Caco-2 (cell line): ENCODE measurements at regions of chr10 and their contacts with region 1.

Region 1: DNA sequence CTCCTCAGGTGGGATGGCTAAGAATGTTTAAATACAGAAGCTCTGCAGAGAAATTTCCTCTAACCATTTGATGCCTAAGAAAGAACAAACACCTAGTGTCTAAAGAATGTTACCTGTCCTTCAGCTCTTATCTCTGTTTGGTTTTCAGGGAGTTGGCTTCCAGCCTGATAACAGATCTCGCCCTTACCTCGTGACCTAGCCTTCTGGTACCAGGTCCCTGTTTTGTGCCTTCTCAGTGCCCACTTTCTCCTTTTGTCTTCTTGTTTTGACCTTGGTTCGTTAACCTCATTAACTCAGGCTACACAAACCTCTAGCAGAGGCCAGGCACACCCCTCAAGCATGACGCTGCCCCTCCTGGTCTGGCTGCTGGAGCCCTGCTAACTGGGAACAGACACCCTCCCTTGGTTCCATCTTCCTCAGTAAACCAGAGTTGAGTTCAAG is 16.1 kb upstream of the RAB11FIP2 start:
- DNase-seq: peak; percentile 79 to 85
- H3K4me3 ChIP-seq: no peak overlapping the region
- H3K4me3 Mint-ChIP-seq: peak overlapping the region; percentile 52
- H3K27ac Mint-ChIP-seq: peak overlapping the region; percentile 88
- H3K4me1 ChIP-seq: peaks cover 43% of the 10 kb centered on the region
- H3K4me1 Mint-ChIP-seq: peaks cover 24% of the 10 kb centered on the region
- H3K27me3 ChIP-seq: no peaks in the 10 kb centered on the region
- H3K27me3 Mint-ChIP-seq: no peaks in the 10 kb centered on the region
- CTCF ChIP-seq: no peak

Region 2: DNA sequence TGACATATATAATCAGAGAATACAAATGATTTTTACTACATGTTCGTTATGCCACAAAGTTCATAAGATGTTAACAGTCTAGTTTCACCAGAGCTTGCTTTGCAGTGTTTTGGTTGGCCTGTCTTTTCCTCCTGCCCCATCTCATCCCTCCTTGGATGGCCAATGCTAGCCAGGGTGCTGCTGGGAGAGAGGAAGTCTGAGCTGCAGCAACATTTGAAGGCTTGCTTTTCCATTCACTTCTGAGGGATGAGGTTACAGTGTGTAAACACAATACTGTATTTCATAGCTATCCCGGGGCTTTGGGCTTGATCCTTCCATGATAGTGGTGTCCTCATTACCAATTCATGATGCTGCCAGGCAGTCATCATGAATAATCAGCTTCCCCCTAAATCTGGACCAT is 186.6 kb before region 1 on chr10:
- CTCF ChIA-PET with region 1: no interaction called
- POLR2A ChIA-PET with region 1: no interaction called
- intact Hi-C with region 1: no loop called
- DNase-seq: no peak
- H3K4me3 ChIP-seq: no peak overlapping the region
- H3K4me3 Mint-ChIP-seq: no peak overlapping the region
- H3K27ac Mint-ChIP-seq: no peak overlapping the region
- H3K4me1 ChIP-seq: no peaks in the 10 kb centered on the region
- H3K4me1 Mint-ChIP-seq: no peaks in the 10 kb centered on the region
- H3K27me3 ChIP-seq: no peaks in the 10 kb centered on the region
- H3K27me3 Mint-ChIP-seq: peaks cover 5% of the 10 kb centered on the region
- CTCF ChIP-seq: no peak

Region 3: GRCh38 chr10:117926491-117926890 is 136.3 kb before region 1 on chr10:
- CTCF ChIA-PET with region 1: no interaction called
- POLR2A ChIA-PET with region 1: no interaction called
- intact Hi-C with region 1: no loop called
- DNase-seq: no peak
- H3K4me3 ChIP-seq: no peak overlapping the region
- H3K4me3 Mint-ChIP-seq: no peak overlapping the region
- H3K27ac Mint-ChIP-seq: no peak overlapping the region
- H3K4me1 ChIP-seq: no peaks in the 10 kb centered on the region
- H3K4me1 Mint-ChIP-seq: no peaks in the 10 kb centered on the region
- H3K27me3 ChIP-seq: no peaks in the 10 kb centered on the region; the same call in 1 of the 2 replicates
- H3K27me3 Mint-ChIP-seq: peaks cover 12% of the 10 kb centered on the region
- CTCF ChIP-seq: no peak

Region 4: DNA sequence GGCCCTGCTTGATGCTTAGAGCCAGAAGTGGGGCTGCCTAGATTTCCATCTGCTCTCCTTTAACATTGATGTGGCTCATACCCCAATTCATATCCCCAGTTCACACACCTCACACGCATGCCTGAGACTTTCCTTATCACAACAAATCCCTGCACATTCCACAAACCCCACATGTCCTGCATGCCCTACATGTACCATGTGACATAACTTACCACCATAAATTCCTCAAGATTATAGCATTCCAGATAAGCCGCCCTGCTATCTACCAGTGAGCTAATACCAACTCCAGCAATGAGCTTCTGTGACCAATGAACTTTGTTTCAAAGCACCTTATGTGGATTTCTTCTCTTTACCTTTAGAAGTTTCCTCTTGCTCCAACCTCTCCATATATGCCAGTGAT is 88.6 kb after region 1 on chr10:
- CTCF ChIA-PET with region 1: no interaction called
- POLR2A ChIA-PET with region 1: no interaction called
- intact Hi-C with region 1: loop called (anchors 1 kb)
- DNase-seq: peak; percentile 84 to 92
- H3K4me3 ChIP-seq: no peak overlapping the region
- H3K4me3 Mint-ChIP-seq: peak overlapping the region; percentile 63
- H3K27ac Mint-ChIP-seq: peak overlapping the region; percentile 97
- H3K4me1 ChIP-seq: peaks cover 40% of the 10 kb centered on the region
- H3K4me1 Mint-ChIP-seq: peaks cover 21% of the 10 kb centered on the region
- H3K27me3 ChIP-seq: no peaks in the 10 kb centered on the region
- H3K27me3 Mint-ChIP-seq: no peaks in the 10 kb centered on the region
- CTCF ChIP-seq: no peak

Region 5: GRCh38 chr10:118373786-118374185 is 311.0 kb after region 1 on chr10:
- CTCF ChIA-PET with region 1: no interaction called
- POLR2A ChIA-PET with region 1: no interaction called
- intact Hi-C with region 1: no loop called
- DNase-seq: no peak
- H3K4me3 ChIP-seq: no peak overlapping the region
- H3K4me3 Mint-ChIP-seq: no peak overlapping the region
- H3K27ac Mint-ChIP-seq: no peak overlapping the region
- H3K4me1 ChIP-seq: peaks cover 5% of the 10 kb centered on the region
- H3K4me1 Mint-ChIP-seq: peaks cover 9% of the 10 kb centered on the region
- H3K27me3 ChIP-seq: no peaks in the 10 kb centered on the region
- H3K27me3 Mint-ChIP-seq: peaks cover 15% of the 10 kb centered on the region
- CTCF ChIP-seq: no peak